ENCODE measurements at regions of chr14 and their contacts with region 1.

Region 1: DNA sequence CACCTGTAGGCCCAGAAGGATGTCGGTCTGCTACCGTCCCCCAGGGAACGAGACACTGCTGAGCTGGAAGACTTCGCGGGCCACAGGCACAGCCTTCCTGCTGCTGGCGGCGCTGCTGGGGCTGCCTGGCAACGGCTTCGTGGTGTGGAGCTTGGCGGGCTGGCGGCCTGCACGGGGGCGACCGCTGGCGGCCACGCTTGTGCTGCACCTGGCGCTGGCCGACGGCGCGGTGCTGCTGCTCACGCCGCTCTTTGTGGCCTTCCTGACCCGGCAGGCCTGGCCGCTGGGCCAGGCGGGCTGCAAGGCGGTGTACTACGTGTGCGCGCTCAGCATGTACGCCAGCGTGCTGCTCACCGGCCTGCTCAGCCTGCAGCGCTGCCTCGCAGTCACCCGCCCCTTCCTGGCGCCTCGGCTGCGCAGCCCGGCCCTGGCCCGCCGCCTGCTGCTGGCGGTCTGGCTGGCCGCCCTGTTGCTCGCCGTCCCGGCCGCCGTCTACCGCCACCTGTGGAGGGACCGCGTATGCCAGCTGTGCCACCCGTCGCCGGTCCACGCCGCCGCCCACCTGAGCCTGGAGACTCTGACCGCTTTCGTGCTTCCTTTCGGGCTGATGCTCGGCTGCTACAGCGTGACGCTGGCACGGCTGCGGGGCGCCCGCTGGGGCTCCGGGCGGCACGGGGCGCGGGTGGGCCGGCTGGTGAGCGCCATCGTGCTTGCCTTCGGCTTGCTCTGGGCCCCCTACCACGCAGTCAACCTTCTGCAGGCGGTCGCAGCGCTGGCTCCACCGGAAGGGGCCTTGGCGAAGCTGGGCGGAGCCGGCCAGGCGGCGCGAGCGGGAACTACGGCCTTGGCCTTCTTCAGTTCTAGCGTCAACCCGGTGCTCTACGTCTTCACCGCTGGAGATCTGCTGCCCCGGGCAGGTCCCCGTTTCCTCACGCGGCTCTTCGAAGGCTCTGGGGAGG is at the start of gene LTB4R:
- DNase-seq: no peak
- H3K4me3 ChIP-seq: no peak within 1 kb of the TSS
- H3K27ac ChIP-seq: no peak within 1 kb of the TSS
- H3K4me1 ChIP-seq: no peaks in the 10 kb centered on the region; a peak in 2 of 7 replicates
- H3K27me3 ChIP-seq: peaks cover 0 to 4% (median 0%) of the 10 kb centered on the region in 4 experiments; a peak in 3 of 7 replicates
- CTCF ChIP-seq: no peak
- EP300 ChIP-seq: no peak
- POLR2A ChIP-seq: no peak
- RAD21 ChIP-seq: no peak
- total RNA-seq, gene LTB4R: 4.1 and 6.8 TPM in 2 replicates

Region 2: DNA sequence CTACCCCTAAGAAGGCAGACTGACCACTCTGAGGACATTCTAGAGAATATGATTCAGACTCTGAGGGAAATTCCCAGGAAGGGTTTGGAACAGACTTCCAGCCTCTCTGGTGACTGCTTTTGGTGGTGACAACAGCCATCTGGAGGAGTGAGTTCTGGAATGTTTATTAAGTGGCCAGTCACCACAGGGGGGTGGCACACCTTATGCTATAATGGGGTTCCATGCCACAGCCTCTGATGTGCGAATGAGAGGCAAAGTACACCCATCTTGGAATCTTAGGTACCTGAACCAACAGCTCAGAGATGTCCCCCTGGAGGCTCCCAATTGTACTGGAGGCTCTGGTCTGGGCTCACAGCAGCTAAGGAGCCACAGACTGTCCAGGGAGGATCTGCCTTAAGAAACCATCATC is 59.0 kb before region 1 on chr14:
- CTCF ChIA-PET with region 1: interaction called, 27 read pairs
- POLR2A ChIA-PET with region 1: interaction called, 5 read pairs
- DNase-seq: no peak
- H3K4me3 ChIP-seq: no peak overlapping the region
- H3K27ac ChIP-seq: no peak overlapping the region
- H3K4me1 ChIP-seq: no peaks in the 10 kb centered on the region
- H3K27me3 ChIP-seq: no peaks in the 10 kb centered on the region
- CTCF ChIP-seq: peak in 1 of 3 experiments; percentile 13; a peak in 1 of 4 replicates
- EP300 ChIP-seq: no peak
- POLR2A ChIP-seq: no peak
- RAD21 ChIP-seq: no peak

Region 3: DNA sequence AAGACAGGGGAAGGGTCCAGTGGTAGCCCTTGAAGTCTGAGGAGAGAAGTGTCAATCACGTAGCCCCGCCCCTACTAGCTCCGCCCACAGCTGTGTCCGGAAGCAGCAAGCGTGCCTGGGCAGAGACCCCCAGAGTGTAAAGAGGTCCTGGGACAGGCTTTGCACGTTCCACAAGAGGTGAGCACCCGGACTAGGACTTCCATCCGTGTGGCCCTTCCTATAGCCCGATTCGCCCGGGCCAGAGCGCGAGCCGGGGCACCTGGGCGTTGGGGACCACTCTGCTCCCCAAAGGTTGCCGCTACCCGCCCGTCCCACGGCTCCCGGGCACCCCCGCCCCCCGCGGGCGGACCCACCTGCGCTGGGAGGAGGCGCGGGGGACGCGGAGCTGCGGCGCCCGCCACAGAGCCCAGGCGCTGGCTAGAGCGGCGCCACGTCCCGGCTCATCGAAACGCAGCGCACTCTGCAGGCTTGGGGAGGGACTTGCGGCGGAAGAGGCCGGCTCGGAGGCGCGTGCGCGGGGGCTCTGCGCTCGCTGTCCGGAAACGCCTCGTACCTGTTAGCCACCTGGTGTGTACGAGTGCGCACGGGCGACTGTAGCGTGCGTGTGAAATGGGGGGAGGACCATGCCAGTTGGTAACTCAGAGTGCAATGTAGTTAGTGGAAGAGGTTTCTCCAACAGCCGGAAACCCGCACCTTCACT is 39.6 kb before region 1 on chr14 and contains the start of gene RABGGTA:
- CTCF ChIA-PET with region 1: interaction called, 36 read pairs
- POLR2A ChIA-PET with region 1: interaction called, 10 read pairs
- DNase-seq: peak; percentile 82 to 98
- H3K4me3 ChIP-seq: peak within 1 kb of the TSS; percentile 61 to 89 (median 82)
- H3K27ac ChIP-seq: peak within 1 kb of the TSS; percentile 96
- H3K4me1 ChIP-seq: peaks cover 0 to 4% (median 2%) of the 10 kb centered on the region in 4 experiments; a peak in 4 of 7 replicates
- H3K27me3 ChIP-seq: no peaks in the 10 kb centered on the region; a peak in 1 of 7 replicates
- CTCF ChIP-seq: peak; percentile 87 to 90 (median 90)
- EP300 ChIP-seq: peak; percentile 14 to 76; a peak in 2 of 3 replicates
- POLR2A ChIP-seq: peak in 1 of 2 experiments; percentile 96; a peak in 2 of 3 replicates
- RAD21 ChIP-seq: peak in 1 of 2 experiments; percentile 25; a peak in 2 of 4 replicates
- total RNA-seq, gene RABGGTA: 16.0 and 16.9 TPM in 2 replicates

Region 4: GRCh38 chr14:24289649-24290249 is 21.2 kb before region 1 on chr14:
- CTCF ChIA-PET with region 1: interaction called, 44 read pairs
- POLR2A ChIA-PET with region 1: interaction called, 5 read pairs
- DNase-seq: no peak
- H3K4me3 ChIP-seq: no peak overlapping the region
- H3K27ac ChIP-seq: no peak overlapping the region
- H3K4me1 ChIP-seq: no peaks in the 10 kb centered on the region
- H3K27me3 ChIP-seq: no peaks in the 10 kb centered on the region
- CTCF ChIP-seq: no peak
- EP300 ChIP-seq: no peak
- POLR2A ChIP-seq: no peak
- RAD21 ChIP-seq: no peak

Region 5: GRCh38 chr14:24321212-24321975 is 10.5 kb after region 1 on chr14:
- CTCF ChIA-PET with region 1: interaction called, 173 read pairs
- POLR2A ChIA-PET with region 1: interaction called, 14 read pairs
- DNase-seq: no peak
- H3K4me3 ChIP-seq: no peak overlapping the region
- H3K27ac ChIP-seq: no peak overlapping the region
- H3K4me1 ChIP-seq: no peaks in the 10 kb centered on the region
- H3K27me3 ChIP-seq: peaks cover 0 to 50% (median 33%) of the 10 kb centered on the region in 4 experiments; a peak in 6 of 7 replicates
- CTCF ChIP-seq: no peak
- EP300 ChIP-seq: no peak
- POLR2A ChIP-seq: no peak
- RAD21 ChIP-seq: no peak

Region 6: DNA sequence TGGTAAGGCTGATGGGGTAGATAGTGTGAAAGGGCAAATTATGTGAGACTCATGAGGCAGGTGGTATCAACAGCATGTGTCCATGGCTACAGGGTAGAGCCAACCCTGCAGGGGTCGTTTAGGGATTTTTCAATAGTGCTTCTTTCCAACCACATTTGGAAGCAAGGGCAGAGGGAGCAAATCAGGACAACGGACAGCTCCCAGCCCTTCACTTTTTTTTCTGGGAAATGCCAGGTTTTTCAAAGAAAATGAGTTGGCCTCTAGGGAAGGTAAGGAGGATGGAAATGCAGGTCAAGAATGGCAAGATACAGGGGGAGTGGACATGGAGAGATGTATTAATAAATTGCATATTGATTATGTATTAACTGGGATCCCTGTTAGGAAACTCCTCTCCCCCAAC is 202.1 kb after region 1 on chr14:
- CTCF ChIA-PET with region 1: no interaction called
- POLR2A ChIA-PET with region 1: no interaction called
- DNase-seq: peak in 1 of 2 experiments; percentile 54
- H3K4me3 ChIP-seq: no peak overlapping the region
- H3K27ac ChIP-seq: no peak overlapping the region
- H3K4me1 ChIP-seq: no peaks in the 10 kb centered on the region
- H3K27me3 ChIP-seq: 0 out of 7 replicates have a peak, but pooled peaks cover 0 to 2% (median 0%) of the 10 kb centered on the region in 4 experiments
- CTCF ChIP-seq: no peak
- EP300 ChIP-seq: no peak
- POLR2A ChIP-seq: no peak
- RAD21 ChIP-seq: no peak

Measured in H1 (cell line).